ENCODE measurements at regions of chr5 and their contacts with region 1.

Region 1: GRCh38 chr5:35926389-35927051 is 11.9 kb downstream of the CAPSL start:
- DNase-seq: peak; percentile 45
- H3K4me3 Mint-ChIP-seq: peak overlapping the region; percentile 18
- H3K27ac Mint-ChIP-seq: no peak overlapping the region
- H3K4me1 Mint-ChIP-seq: peaks cover 37% of the 10 kb centered on the region
- H3K27me3 Mint-ChIP-seq: peaks cover 2% of the 10 kb centered on the region

Region 2: GRCh38 chr5:34499001-34499734 is 1427.4 kb before region 1 on chr5:
- intact Hi-C with region 1: loop called (anchors 5 kb)
- DNase-seq: peak; percentile 12
- H3K4me3 Mint-ChIP-seq: no peak overlapping the region
- H3K27ac Mint-ChIP-seq: peak overlapping the region; percentile 44
- H3K4me1 Mint-ChIP-seq: peaks cover 16% of the 10 kb centered on the region
- H3K27me3 Mint-ChIP-seq: peaks cover 4% of the 10 kb centered on the region

Region 3: DNA sequence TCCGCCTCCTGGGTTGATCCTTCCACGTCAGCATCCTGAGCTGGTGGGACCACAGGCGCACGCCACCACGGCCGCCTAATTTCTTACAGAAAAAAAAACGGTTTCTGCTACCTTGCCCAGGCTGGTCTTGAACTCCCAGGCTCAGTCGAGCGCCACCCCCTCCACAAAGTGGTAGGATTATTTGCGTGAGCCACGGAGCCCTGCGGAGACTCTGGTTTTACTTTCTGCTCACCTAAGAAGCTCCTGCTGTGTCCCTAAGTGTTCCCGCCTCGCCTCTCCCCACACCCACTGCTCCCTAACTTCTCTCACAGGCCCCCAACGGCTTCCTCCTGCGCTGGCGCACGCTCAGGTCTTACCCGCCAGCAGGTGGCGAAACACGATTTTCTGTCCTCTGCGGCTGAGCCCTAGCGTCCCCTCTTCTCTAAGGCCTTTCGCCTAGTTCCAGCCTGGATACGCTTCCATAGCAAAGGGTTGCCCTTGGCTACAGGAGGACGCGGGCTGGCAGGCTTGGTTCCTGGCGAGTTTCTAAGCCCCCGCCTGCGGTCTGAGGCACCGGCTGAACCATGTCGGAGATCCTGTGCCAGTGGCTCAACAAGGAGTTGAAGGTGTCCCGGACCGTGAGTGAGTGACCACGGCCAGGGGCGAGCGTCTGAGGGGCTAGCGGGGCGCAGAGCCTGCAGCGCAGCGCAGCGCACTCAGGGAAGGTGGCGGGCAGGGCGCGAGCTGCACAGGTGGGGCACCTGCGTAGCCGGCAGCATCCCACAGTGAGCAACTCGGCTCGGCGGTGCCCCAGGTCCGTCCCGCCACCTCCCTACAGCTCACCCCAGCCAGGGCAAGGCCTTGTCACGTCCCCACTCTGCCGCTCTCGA is 308.9 kb before region 1 on chr5 and contains the start of gene SPEF2:
- intact Hi-C with region 1: loop called (anchors 1 kb)
- DNase-seq: peak; percentile 77
- H3K4me3 Mint-ChIP-seq: peak within 1 kb of the TSS; percentile 89
- H3K27ac Mint-ChIP-seq: peak within 1 kb of the TSS; percentile 95
- H3K4me1 Mint-ChIP-seq: peaks cover 28% of the 10 kb centered on the region
- H3K27me3 Mint-ChIP-seq: no peaks in the 10 kb centered on the region
- total RNA-seq, gene SPEF2: 10.0 and 11.5 TPM in 2 replicates

Region 4: DNA sequence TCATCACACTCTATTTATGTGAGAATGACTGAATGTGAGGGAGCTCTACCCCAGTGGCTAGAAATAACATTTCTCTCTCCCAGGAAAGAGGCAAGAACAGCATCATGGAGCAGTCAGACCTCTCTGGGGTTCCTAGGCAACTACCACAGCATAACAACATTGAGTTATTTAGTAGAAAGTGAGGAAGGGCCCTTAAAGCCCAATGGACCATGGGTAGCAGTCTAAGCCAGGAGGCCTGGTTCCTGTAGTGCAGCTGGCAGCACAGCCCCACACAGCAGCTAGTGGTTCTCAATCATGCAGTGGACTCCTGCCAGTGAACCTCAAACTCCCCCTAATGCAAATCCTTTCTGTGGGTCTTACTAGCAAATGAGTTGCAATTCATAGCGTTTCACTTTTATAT is 253.5 kb before region 1 on chr5:
- intact Hi-C with region 1: loop called (anchors 1 kb)
- DNase-seq: peak; percentile 16
- H3K4me3 Mint-ChIP-seq: no peak overlapping the region
- H3K27ac Mint-ChIP-seq: peak overlapping the region; percentile 42
- H3K4me1 Mint-ChIP-seq: peaks cover 46% of the 10 kb centered on the region
- H3K27me3 Mint-ChIP-seq: no peaks in the 10 kb centered on the region

Region 5: GRCh38 chr5:35785601-35786085 is 140.9 kb before region 1 on chr5:
- intact Hi-C with region 1: loop called (anchors 2 kb)
- DNase-seq: no peak
- H3K4me3 Mint-ChIP-seq: no peak overlapping the region
- H3K27ac Mint-ChIP-seq: peak overlapping the region; percentile 85
- H3K4me1 Mint-ChIP-seq: peaks cover 66% of the 10 kb centered on the region
- H3K27me3 Mint-ChIP-seq: no peaks in the 10 kb centered on the region

Region 6: DNA sequence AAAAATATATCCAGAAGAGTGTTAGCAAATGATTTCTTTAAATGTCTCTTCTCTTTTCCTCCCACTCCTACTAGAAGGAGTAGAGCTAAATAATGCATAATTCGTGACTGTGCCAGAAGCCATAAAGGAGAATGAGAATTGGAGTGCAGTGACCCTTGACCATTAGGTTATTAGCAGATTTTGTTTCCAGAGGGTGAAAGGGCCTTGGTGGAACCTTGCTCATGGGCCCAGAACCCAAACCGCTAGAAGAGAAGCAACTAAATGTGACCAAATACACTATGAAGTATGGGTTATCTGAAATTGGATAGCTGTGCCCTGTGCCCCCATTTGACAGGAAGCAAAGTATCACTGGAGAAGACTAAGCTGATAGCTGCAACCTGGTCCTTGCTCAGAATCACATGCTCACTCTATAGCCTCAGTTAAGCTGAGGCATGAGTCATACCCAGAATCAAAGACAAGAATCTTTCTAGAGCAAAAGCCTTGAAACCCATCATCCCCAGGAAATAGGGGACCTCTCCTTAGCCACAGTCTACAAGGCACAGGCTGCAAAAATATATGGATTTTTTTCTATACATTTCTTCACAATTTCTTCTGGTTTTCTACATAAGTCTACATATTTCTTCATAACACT is 24.4 kb before region 1 on chr5:
- intact Hi-C with region 1: loop called (anchors 1 kb)
- DNase-seq: peak; percentile 49
- H3K4me3 Mint-ChIP-seq: peak overlapping the region; percentile 28
- H3K27ac Mint-ChIP-seq: peak overlapping the region; percentile 83
- H3K4me1 Mint-ChIP-seq: peaks cover 78% of the 10 kb centered on the region
- H3K27me3 Mint-ChIP-seq: no peaks in the 10 kb centered on the region

Region 7: DNA sequence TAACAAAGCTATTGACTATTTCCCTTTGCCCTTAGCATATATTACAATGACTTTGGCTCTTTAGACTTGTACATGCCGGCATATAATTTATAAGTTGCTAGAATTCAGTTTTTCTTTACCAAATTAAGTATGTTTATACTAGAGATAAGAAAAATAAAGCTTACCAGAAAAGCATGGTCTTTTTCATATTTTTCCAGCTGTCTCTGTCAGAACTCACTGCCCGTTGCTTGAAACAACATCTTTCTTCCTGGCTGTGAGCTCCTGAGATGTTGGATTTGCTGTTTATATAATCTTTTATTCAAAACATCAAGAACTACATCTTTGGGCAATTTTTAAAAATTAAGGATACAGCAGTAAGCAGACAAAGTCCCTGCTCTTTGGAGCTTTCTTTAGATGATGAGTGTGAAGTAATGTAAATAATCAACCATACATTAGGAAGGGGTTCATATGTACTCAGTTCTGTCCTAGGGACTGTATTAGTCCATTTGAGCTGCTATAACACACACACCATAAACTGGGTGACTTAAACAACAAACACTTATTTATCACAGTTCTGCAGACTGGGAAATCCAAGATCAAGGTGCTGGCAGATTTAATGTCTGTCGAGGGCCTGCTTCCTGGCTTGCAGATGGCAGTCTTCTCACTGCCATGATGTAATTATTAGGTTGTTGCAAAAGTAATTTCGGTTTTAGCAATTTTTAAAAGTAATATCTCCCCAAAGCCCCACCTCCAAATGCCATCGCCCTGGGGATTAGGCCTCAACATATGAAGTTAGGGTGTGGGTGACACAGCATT is 420.6 kb after region 1 on chr5:
- intact Hi-C with region 1: no loop called
- DNase-seq: no peak
- H3K4me3 Mint-ChIP-seq: no peak overlapping the region
- H3K27ac Mint-ChIP-seq: no peak overlapping the region
- H3K4me1 Mint-ChIP-seq: no peaks in the 10 kb centered on the region
- H3K27me3 Mint-ChIP-seq: peaks cover 5% of the 10 kb centered on the region

Measured in activated T-helper 2 cell treated with anti-CD3 and anti-CD28 coated beads, Interferon-gamma antibody, Interleukin-2, Interleukin-4, amounts not matched to agents 10 μg/mL and 5 μg/mL and 100 μg/mL, durations not matched to agents 14 hours and 24 hours and 36 hours (primary cell).